Left cardiac atrium (tissue), 4 donors: ENCODE measurements at regions of chr22 and their contacts with region 1.

Region 1: GRCh38 chr22:39306581-39307361 is 12.7 kb downstream of the RPL3 start:
- DNase-seq: peak; percentile 56
- ATAC-seq: peak; percentile 1 to 17

Region 2: DNA sequence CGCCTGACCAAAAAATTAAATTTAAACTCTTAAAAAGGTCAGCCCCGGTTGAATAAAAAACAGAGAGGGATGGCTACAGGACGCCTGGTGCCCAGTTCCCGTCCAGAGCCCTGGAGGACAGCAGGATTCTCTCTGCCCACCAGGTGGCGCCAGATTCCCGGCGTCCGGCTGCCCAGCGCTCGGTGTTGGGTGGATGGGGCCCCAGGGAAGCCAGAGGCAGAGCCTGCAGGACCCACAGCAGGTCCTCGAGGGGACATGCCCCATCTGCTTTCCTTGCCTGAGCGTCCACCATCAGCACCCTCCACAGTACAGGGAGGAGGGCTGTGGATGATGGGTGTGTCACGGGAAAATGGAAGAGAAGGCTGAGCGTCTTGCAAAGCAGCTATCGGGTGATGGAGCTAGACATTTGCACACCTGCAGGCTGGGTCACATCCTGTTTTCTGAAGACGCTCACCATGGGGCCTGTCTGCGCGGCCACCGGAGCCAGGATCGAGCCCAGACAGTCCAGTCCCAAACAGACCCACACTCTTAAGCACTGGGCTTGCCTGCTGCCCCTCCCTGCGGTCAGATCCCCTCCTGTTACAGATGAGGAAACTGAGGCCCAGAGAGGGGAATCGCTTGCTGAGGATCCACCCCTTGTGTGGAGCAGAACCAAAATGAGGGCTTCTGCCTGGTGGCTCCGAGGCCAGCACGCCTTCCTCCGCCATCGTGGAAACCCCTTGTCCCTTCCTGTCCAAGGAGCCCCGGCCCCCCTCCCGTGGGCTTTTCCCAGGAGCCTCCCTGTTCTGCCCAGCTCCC is 135.7 kb before region 1 on chr22:
- intact Hi-C with region 1: loop called in 1 of 2 experiments (anchors 5 kb)
- DNase-seq: peak; percentile 88
- ATAC-seq: peak; percentile 81 to 88

Region 3: DNA sequence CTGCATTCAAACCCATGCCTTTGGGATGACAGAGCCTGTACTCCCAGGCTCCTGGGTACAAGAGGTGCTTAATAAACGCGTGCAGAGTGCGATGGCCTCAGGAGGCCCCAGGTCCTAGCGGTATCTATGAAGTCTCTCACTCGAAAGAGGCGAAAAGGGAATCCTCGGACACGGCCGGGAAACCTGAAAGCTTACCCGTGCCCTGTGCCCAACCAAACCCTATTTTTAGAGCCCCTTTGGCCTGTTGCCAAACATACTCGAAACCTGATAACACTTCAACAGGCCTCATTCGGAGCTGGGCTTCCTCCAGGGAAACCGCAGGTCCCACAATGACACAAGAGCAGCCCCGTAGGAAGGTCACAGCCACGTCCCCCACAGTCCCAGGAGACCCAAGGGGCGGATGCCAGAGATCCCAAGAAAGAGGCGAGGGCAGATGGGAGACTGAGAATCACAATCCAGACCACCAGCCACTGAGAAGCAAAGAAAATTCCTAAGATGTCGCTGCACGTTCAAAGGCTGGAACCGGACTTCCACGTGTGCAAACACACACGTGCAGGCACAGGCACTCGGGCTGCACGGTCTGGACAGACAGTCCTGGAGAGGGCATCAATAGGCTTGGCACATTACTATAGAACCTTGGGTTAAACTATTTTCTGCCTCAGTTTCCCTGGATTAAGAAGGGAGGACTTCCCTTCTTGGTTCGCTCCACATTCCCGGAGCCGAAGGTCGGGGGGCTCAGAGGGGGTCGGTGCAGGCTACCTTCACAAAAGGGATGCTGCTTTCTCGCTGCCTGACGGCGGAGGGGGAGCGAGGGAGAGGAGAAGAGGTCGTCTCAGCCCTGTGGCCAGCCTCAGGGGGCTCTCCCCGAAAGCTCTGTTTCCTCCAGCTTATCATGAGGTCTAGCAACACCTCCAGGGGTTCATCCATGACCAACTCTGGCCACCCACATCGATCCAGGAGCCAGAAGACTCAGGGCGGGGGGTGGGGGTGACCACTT is 70.2 kb before region 1 on chr22:
- intact Hi-C with region 1: loop called in 1 of 2 experiments (anchors 5 kb)
- DNase-seq: peak; percentile 77
- ATAC-seq: peak; percentile 18 to 50

Region 4: DNA sequence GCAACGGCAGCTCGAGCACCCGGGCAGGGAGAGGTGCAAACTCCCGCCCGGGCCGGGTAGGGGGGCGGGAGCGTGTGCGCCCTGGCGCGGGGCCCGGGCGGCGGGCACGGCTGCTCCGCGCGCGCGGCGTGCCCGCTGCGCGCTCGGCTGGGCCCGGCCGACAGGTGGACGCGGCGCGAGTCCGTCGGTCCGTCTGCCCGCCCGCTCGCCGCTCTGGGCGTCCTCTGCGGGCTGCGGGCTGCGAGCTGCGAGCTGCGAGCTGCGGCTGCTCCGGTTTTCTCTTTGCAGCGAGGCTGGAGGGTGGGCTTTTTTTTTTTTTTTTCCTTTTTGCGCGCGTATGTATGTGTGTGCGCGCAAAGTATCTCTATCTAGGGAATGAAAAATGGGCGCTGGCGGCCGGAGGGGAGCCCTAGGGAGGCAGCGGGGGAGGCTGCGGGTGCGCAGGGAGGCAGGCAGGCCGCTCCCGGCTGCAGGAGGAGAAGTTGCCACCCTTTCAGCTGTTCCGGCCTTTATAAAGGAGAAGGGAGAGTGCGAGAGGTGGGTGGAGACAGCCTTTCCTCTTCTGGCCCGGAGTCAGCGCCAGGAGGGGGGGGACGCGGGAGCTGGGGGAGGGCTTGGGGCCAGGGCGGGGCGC is 62.2 kb before region 1 on chr22 and contains the start of gene PDGFB:
- intact Hi-C with region 1: loop called (anchors 2 kb)
- DNase-seq: peak; percentile 57
- ATAC-seq: peak; percentile 36 to 60
- total RNA-seq, gene PDGFB: 17.5 to 51.2 TPM

Region 5: DNA sequence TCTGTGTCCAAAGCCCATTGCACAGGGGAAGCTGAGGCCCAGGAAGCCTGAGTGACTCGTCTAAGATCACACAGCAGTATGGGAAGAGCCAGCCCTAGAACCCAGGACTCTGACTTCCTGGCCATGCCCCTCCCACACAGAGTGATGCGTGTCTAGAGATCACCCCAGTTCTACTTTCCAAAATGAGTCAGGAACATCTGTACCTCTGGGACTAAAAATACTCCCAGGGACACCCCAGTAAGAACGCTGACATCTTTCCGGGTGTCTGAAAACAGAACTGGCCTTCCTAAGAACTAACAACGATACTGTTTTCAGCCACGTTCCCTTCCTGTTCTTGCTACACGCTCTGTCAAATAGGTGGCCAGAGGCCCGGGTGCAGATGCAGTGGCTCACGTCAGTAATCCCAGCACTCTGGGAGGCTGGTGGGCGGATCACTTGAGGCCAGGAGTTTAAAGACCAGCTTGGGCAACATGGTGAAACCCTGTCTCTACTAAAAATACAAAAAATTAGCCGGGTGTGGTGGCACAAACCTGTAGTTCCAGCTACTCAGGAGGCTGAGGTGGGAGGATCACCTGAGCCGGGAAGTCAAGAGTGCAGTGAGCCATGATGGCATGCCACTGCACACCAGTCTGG is 40.3 kb before region 1 on chr22:
- intact Hi-C with region 1: no loop called
- DNase-seq: no peak
- ATAC-seq: peak in 1 of 2 donors; percentile 47